Right ventricle myocardium inferior (tissue), 1 donor: ENCODE measurements at regions of chr11 and their contacts with region 1.

Region 1: GRCh38 chr11:65083834-65084597 is at the starts of genes CDCA5 and ZFPL1:
- DNase-seq: peak; percentile 96
- ATAC-seq: peak; percentile 95
- total RNA-seq, gene CDCA5: 1.7 TPM
- total RNA-seq, gene ZFPL1: 25.0 TPM

Region 2: GRCh38 chr11:65040847-65041621 is 43.0 kb before region 1 on chr11 and contains the start of gene SAC3D1:
- intact Hi-C with region 1: loop called (anchors 5 kb)
- DNase-seq: peak; percentile 95
- ATAC-seq: peak; percentile 95
- total RNA-seq, gene SAC3D1: 7.5 TPM

Region 3: GRCh38 chr11:65117216-65118096 is 33.4 kb after region 1 on chr11 and contains the start of gene ZNHIT2:
- intact Hi-C with region 1: loop called (anchors 1 kb)
- DNase-seq: peak; percentile 100
- ATAC-seq: peak; percentile 88
- total RNA-seq, gene ZNHIT2: 5.8 TPM